B cell (primary cell): ENCODE measurements at regions of chr13 and their contacts with region 1.

Region 1: DNA sequence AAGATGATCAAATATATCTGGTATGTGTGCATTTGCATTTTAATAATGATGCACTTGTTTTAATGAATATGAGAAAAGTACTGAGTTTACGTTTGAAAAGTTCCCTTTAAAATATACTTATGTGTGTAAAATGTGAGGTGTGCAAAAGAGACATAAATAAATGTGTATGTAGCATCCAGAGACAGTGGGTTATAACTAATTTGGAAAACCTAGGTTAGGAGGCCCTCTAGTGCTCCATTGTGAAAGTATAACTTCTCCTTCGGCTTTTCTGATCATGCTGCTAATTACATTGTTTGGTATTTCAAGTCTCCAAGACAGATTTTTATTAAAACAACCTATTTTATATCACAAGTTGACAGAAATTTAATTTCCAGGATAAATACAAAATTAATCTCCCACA is 30.1 kb downstream of the SCEL start:
- DNase-seq: peak; percentile 48
- ATAC-seq: peak; percentile 51
- H3K4me3 ChIP-seq: no peak overlapping the region
- H3K4me3 Mint-ChIP-seq: no peak overlapping the region
- H3K27ac ChIP-seq: no peak overlapping the region
- H3K27ac Mint-ChIP-seq: no peak overlapping the region
- H3K4me1 ChIP-seq: no peaks in the 10 kb centered on the region
- H3K4me1 Mint-ChIP-seq: no peaks in the 10 kb centered on the region
- H3K27me3 ChIP-seq: no peaks in the 10 kb centered on the region
- H3K27me3 Mint-ChIP-seq: peaks cover 8% of the 10 kb centered on the region
- CTCF ChIP-seq: peak; percentile 72

Region 2: DNA sequence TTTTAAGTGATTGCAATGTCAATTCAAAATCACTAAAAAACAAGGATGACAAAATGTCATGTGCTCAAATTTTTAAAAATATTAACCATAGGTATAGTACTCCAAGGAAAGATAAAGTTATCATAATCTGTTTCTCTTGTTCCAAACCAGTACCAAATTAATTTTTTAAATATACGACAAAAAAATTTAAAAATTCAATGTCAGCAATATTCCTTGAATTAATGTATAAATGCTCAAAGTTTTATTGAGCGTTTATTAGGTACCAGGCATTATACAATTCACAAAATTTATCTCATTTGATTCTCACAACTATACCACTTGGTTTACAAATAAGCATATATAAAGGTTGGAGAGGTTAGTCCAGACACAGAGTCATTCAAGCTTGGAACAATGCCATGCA is 303.4 kb before region 1 on chr13:
- CTCF ChIA-PET with region 1: no interaction called
- POLR2A ChIA-PET with region 1: no interaction called
- intact Hi-C with region 1: loop called (anchors 5 kb)
- DNase-seq: no peak
- ATAC-seq: no peak
- H3K4me3 ChIP-seq: no peak overlapping the region
- H3K4me3 Mint-ChIP-seq: no peak overlapping the region
- H3K27ac ChIP-seq: no peak overlapping the region
- H3K27ac Mint-ChIP-seq: no peak overlapping the region
- H3K4me1 ChIP-seq: no peaks in the 10 kb centered on the region
- H3K4me1 Mint-ChIP-seq: no peaks in the 10 kb centered on the region
- H3K27me3 ChIP-seq: no peaks in the 10 kb centered on the region
- H3K27me3 Mint-ChIP-seq: no peaks in the 10 kb centered on the region
- CTCF ChIP-seq: no peak

Region 3: DNA sequence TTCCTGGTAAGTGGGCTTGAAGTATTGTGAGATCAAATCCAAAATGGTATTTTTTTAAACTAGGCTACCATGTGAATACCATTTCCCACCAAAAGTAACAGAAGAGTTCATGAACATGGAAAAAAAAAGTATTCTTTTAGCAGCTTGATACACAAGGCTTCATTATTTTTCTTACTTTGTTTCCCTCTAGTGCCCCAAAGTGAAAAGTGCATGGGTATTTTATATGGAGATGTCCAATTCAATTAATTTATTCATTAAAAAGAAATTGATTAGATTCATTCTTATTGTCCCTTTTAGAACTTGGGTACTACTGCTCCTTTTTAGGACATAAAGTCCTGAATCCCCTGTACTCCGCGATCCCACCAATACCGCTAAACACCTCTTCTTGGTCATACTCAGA is 58.8 kb before region 1 on chr13:
- CTCF ChIA-PET with region 1: interaction called, 11 read pairs
- POLR2A ChIA-PET with region 1: no interaction called
- intact Hi-C with region 1: no loop called
- DNase-seq: no peak
- ATAC-seq: no peak
- H3K4me3 ChIP-seq: no peak overlapping the region
- H3K4me3 Mint-ChIP-seq: no peak overlapping the region
- H3K27ac ChIP-seq: no peak overlapping the region
- H3K27ac Mint-ChIP-seq: no peak overlapping the region
- H3K4me1 ChIP-seq: peaks cover 20 to 22% of the 10 kb centered on the region in 2 donors
- H3K4me1 Mint-ChIP-seq: peaks cover 18% of the 10 kb centered on the region
- H3K27me3 ChIP-seq: peaks cover 0 to 4% (median 2%) of the 10 kb centered on the region in 4 experiments
- H3K27me3 Mint-ChIP-seq: peaks cover 4% of the 10 kb centered on the region
- CTCF ChIP-seq: peak; percentile 10

Region 4: DNA sequence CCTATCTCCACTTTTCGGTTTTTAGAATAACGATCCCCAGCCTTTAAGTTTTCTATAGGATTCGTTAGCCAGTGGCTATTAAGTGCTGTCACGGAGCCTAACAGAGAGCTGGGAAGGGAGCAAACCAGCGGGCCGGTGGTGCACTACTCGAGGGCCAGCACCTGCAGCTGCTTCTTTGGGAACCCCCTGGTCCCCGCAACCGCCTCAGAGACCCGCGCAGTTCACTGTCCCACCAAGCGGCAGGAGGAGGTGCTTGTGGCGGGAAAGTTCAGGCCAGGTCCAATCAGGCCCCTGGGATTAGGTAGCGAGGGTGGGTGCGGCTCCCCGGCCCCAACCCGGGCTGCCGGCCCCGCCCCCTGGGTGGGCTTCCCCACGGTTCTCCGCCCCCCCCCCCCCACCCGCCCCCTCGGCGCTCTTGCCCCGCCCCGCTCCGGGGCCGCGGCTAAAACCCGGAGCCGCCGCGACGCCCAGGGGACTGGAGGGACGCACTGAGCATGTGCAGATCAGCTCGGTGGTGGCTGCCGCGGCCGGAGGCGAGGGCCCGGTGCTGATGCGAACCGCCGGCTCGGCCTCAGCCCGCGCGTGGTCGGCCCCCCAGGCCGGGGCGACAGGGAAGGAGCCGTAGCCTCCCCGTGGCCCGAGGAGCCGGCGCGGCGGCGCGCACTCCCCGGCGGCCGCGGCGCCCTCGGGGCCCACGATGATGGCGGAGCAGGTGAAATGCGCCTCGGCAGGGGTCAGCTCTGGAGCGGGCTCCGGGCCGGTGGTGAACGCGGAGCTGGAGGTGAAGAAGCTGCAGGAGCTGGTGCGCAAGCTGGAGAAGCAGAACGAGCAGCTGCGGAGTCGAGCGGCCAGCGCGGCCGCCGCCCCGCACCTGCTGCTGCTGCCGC is 131.8 kb after region 1 on chr13 and contains the start of gene SLAIN1:
- CTCF ChIA-PET with region 1: no interaction called
- POLR2A ChIA-PET with region 1: no interaction called
- intact Hi-C with region 1: no loop called
- DNase-seq: peak; percentile 91
- ATAC-seq: peak; percentile 87
- H3K4me3 ChIP-seq: peak within 1 kb of the TSS; percentile 71 to 97 (median 80)
- H3K4me3 Mint-ChIP-seq: peak within 1 kb of the TSS; percentile 97
- H3K27ac ChIP-seq: peak within 1 kb of the TSS; percentile 71 to 84
- H3K27ac Mint-ChIP-seq: peak within 1 kb of the TSS; percentile 79
- H3K4me1 ChIP-seq: peaks cover 16 to 18% of the 10 kb centered on the region in 2 donors
- H3K4me1 Mint-ChIP-seq: peaks cover 26% of the 10 kb centered on the region
- H3K27me3 ChIP-seq: no peaks in the 10 kb centered on the region
- H3K27me3 Mint-ChIP-seq: no peaks in the 10 kb centered on the region
- CTCF ChIP-seq: no peak
- total RNA-seq, gene SLAIN1: 25.2 and 29.5 TPM in 2 replicates